ENCODE measurements at regions of chr9 and their contacts with region 1.

Region 1: GRCh38 chr9:87336914-87337333 is 160.7 kb upstream of the DAPK1 start:
- DNase-seq: no peak
- ATAC-seq: peak; percentile 62 to 83
- H3K4me3 ChIP-seq: peak overlapping the region; percentile 40
- H3K27ac ChIP-seq: no peak overlapping the region
- H3K4me1 ChIP-seq: peaks cover 2% of the 10 kb centered on the region
- H3K27me3 ChIP-seq: no peaks in the 10 kb centered on the region

Region 2: GRCh38 chr9:86434039-86434726 is 902.7 kb before region 1 on chr9:
- intact Hi-C with region 1: loop called in 1 of 4 experiments (anchors 10 kb)
- DNase-seq: peak in 2 of 3 donors; percentile 33 to 46
- ATAC-seq: peak in 1 of 2 donors; percentile 70
- H3K4me3 ChIP-seq: no peak overlapping the region
- H3K27ac ChIP-seq: no peak overlapping the region
- H3K4me1 ChIP-seq: no peaks in the 10 kb centered on the region
- H3K27me3 ChIP-seq: no peaks in the 10 kb centered on the region

Region 3: DNA sequence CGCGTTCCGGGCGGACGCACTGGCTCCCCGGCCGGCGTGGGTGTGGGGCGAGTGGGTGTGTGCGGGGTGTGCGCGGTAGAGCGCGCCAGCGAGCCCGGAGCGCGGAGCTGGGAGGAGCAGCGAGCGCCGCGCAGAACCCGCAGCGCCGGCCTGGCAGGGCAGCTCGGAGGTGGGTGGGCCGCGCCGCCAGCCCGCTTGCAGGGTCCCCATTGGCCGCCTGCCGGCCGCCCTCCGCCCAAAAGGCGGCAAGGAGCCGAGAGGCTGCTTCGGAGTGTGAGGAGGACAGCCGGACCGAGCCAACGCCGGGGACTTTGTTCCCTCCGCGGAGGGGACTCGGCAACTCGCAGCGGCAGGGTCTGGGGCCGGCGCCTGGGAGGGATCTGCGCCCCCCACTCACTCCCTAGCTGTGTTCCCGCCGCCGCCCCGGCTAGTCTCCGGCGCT is 160.7 kb after region 1 on chr9 and contains the start of gene DAPK1:
- intact Hi-C with region 1: loop called in 2 of 4 experiments (anchors 10 kb)
- DNase-seq: peak; percentile 63 to 86 (median 83)
- ATAC-seq: peak; percentile 89
- H3K4me3 ChIP-seq: peak within 1 kb of the TSS; percentile 75
- H3K27ac ChIP-seq: no peak within 1 kb of the TSS
- H3K4me1 ChIP-seq: peaks cover 3% of the 10 kb centered on the region
- H3K27me3 ChIP-seq: no peaks in the 10 kb centered on the region
- total RNA-seq, gene DAPK1: 15.1 to 20.1 (median 18.5) TPM

Region 4: GRCh38 chr9:87662808-87663528 is 326.0 kb after region 1 on chr9:
- intact Hi-C with region 1: loop called (anchors 1 to 5 kb)
- DNase-seq: peak; percentile 79 to 92 (median 91)
- ATAC-seq: peak; percentile 70 to 85
- H3K4me3 ChIP-seq: no peak overlapping the region
- H3K27ac ChIP-seq: no peak overlapping the region
- H3K4me1 ChIP-seq: no peaks in the 10 kb centered on the region
- H3K27me3 ChIP-seq: no peaks in the 10 kb centered on the region

Region 5: DNA sequence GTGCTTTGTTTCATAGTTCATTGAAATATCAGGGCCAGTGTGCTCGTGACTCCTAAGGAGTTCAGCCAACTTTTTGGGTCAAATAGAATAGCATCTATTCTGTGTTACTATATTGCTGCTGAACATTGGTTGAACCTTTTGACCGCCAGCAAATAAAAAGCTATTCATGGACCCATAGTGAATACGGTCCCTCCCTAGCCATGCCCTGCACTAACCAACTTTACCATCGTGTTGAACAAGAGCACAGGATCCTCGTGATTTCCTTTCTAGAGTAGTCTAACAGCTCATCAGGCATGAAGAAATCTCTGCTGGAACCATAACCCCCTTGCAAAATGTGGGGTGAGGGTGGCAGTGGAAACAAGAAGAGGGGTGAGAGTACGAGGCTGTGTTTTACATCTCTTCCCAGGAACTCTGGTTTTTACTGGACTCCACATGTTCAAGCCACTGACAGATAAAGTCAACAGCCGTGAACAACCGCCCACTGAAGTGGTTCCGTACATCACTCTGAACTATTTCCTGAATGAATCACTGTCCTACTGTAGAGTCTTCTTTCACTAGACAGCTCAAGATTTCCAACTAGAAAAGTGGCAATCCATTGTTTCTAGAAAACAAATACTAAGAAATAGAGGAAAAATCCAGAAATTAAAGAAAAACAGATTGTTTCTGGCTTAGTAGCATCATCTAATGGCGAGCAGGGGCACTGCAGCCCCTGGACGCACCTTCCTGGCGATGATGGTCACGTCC is 475.6 kb after region 1 on chr9:
- intact Hi-C with region 1: loop called in 1 of 4 experiments (anchors 10 kb)
- DNase-seq: peak in 1 of 3 donors; percentile 67
- ATAC-seq: peak in 1 of 2 donors; percentile 63
- H3K4me3 ChIP-seq: no peak overlapping the region
- H3K27ac ChIP-seq: no peak overlapping the region
- H3K4me1 ChIP-seq: no peaks in the 10 kb centered on the region
- H3K27me3 ChIP-seq: no peaks in the 10 kb centered on the region

Measured in right cardiac atrium (tissue), 5 donors.